Breast epithelium (tissue), 4 donors: ENCODE measurements at regions of chr6 and their contacts with region 1.

Region 1: GRCh38 chr6:99079058-99079457 is 131.3 kb upstream of the FBXL4 start:
- DNase-seq: no peak
- H3K4me3 ChIP-seq: no peak overlapping the region
- H3K27ac ChIP-seq: no peak overlapping the region
- H3K4me1 ChIP-seq: no peaks in the 10 kb centered on the region
- H3K27me3 ChIP-seq: no peaks in the 10 kb centered on the region
- CTCF ChIP-seq: no peak
- POLR2A ChIP-seq: no peak

Region 2: DNA sequence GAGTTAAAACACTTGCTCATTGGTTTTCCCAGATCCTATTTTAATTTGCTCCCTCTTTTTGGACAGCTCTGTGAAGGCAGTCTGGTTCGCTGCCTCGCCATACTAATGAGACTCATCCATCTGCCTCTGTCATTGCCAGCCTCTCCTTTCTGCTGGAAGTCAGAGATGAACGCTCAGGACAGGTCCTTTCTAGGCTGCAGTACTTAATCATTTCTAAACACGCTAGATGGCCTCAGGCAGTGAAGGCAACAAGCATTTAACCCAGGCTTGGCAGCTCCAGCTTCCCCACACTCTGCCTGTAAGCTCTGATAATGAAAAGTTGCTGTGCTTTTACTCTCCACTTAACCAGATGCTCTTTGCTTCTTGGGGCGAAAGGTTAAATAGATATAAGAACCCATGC is 531.4 kb before region 1 on chr6:
- intact Hi-C with region 1: loop called (anchors 5 kb)
- DNase-seq: no peak
- H3K4me3 ChIP-seq: no peak overlapping the region
- H3K27ac ChIP-seq: no peak overlapping the region
- H3K4me1 ChIP-seq: no peaks in the 10 kb centered on the region
- H3K27me3 ChIP-seq: no peaks in the 10 kb centered on the region
- CTCF ChIP-seq: no peak
- POLR2A ChIP-seq: no peak